GM10248 (cell line): ENCODE measurements at regions of chr21 and their contacts with region 1.

Region 1: DNA sequence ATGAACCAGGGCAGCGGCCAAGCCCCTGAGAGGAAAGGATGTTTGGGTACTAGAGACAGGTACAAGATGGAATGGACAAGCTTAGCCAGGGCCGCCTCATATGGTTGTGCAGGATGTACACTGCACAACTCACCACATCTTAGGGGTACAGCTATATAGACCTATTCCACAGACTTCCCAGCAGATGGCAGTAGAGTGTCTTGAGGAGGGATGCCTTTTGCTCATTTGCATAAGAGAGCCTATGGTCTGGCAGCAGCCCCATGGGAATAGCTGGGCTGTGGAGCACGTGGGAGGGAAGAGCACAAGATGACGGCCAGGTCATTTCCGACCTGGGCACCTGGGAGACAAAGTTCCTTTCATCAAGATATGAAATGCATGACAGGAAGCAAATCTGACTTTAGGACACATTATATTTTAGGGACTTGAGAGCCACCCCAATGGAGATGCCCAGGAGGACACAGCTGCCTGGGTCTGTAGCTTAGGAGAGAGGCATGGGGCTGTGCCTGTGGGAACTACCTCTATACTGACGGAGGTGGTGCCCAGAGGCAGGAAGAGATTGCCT is 215.5 kb downstream of the KCNJ6 start:
- DNase-seq: peak; percentile 80
- CTCF ChIP-seq: peak; percentile 65

Region 2: GRCh38 chr21:37593015-37593414 is 107.7 kb before region 1 on chr21:
- CTCF ChIA-PET with region 1: no interaction called
- POLR2A ChIA-PET with region 1: no interaction called
- DNase-seq: no peak
- CTCF ChIP-seq: no peak

Region 3: GRCh38 chr21:37686991-37687810 is 13.5 kb before region 1 on chr21:
- CTCF ChIA-PET with region 1: interaction called, 16 read pairs
- POLR2A ChIA-PET with region 1: no interaction called
- DNase-seq: no peak
- CTCF ChIP-seq: no peak

Region 4: DNA sequence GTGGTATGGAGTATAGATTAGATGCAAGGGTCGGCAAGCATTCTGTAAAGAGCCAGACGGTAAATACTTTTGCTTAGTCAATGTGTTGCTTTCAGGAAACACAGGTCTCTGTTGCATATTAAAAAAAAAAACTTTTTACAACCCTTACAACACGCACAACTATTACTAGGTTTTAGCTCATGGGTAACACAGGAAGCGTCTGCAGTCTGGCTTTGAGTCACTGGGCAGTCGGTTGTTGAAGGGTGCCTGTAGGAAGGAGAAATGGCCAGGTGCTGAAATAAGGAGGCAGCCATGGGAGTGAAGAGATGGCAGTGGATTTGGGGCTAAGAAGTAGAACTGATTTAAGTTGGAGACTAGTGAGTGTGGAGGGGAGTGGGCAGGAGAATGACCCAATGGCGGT is 23.5 kb after region 1 on chr21:
- CTCF ChIA-PET with region 1: no interaction called
- POLR2A ChIA-PET with region 1: no interaction called
- DNase-seq: no peak
- CTCF ChIP-seq: no peak